Right ventricle myocardium inferior (tissue), 1 donor: ENCODE measurements at regions of chr12 and their contacts with region 1.

Region 1: GRCh38 chr12:53675651-53676453 is at the start of gene ATP5MC2:
- DNase-seq: peak; percentile 99
- ATAC-seq: peak; percentile 96
- total RNA-seq, gene ATP5MC2: 600 TPM

Region 2: GRCh38 chr12:53205747-53206419 is 470.0 kb before region 1 on chr12:
- intact Hi-C with region 1: no loop called
- DNase-seq: no peak
- ATAC-seq: no peak

Region 3: GRCh38 chr12:53543539-53543938 is 132.3 kb before region 1 on chr12:
- intact Hi-C with region 1: loop called (anchors 1 kb)
- DNase-seq: no peak
- ATAC-seq: peak; percentile 87

Region 4: DNA sequence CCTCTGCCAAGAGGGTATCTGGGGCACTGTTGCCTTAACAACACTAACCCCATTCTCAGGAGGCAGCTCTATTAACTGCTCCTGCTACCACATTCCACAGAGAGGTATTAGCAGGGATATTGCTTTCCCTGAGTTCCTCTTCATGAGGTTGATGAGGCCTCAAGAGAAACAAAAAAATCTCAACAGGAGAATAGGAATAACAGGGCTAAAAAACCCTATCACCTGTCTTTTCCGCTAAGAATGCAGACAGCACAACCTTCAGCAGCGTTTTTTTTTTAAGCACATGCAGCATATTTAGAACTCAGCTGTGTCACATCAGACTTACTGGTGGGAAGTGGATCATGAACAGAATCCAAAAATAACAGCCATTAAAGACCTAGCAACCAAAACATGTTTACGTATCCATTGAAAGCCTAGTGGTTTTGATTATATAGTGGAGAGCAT is 78.9 kb before region 1 on chr12:
- intact Hi-C with region 1: loop called (anchors 5 kb)
- DNase-seq: no peak
- ATAC-seq: peak; percentile 88

Region 5: GRCh38 chr12:53625946-53626701 is 49.7 kb before region 1 on chr12 and contains the start of gene ATF7:
- intact Hi-C with region 1: loop called (anchors 1 kb)
- DNase-seq: peak; percentile 99
- ATAC-seq: peak; percentile 98
- total RNA-seq, gene ATF7: 39.8 TPM

Region 6: DNA sequence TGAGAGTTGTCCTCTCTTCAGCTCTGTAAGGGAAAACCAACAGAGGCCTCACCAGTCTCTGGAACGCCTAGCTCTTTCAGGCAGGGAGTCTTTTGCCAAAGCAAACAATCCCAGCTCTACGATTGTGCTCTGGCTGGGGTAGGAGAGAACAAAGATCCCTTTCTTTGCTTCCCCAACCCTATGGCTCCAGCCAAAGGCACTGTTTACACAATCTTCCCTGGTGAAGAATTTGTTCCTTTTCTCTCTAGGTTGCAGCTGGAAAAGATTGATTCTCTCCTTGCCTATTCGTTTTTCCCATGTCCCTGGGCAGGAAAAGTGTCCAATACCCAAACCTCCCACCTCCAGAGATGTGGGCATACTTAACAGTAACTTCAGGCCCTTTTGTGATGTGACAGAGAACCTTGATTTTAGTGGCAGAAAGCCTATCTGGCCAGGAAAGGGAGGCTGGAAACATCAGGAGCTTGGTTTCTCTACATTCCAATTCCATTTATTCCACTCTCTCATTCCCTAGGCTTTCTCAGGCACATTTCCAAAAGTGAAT is 16.8 kb before region 1 on chr12:
- intact Hi-C with region 1: loop called (anchors 2 kb)
- DNase-seq: no peak
- ATAC-seq: peak; percentile 95